PC-9 (cell line): ENCODE measurements at regions of chr2 and their contacts with region 1.

Region 1: GRCh38 chr2:176171351-176172006 is 14.4 kb downstream of the HOXD3 start:
- DNase-seq: no peak
- H3K4me3 ChIP-seq: no peak overlapping the region
- H3K27ac ChIP-seq: no peak overlapping the region
- H3K4me1 ChIP-seq: no peaks in the 10 kb centered on the region
- H3K27me3 ChIP-seq: peaks cover 46% of the 10 kb centered on the region
- CTCF ChIP-seq: no peak

Region 2: DNA sequence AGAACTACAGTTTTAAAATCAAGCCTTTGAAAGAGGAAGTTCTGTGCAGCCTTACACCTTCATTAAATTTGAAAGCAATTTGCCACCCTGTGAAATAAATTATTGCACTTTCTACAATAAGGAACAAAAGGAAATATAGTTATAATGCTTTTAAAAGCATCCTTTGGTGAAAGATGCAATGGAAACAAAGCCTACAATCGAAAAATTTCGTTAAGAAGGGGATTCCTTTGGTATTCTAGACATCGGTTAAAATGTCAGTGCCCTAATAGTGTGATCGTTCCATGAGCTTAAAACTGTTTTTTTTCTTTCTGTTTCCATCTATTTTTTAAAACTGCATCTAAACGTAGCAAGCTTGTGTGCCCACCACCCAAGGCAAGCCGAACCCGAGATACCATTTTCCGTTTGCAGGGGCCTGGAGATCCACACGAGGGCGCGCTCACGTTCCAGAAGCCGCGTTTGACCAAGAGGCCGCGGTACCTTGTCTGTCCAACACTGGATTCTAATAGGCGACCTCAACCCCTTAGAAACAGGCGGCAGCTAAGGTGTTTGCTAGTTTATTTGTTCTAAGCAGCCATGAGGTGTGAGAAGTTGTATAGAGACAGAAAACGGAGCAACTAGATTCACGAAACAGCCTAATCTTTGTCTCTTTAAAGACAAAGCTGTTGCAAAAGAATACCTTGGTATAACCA is 60.4 kb before region 1 on chr2:
- CTCF ChIA-PET with region 1: interaction called, 10 read pairs
- POLR2A ChIA-PET with region 1: no interaction called
- intact Hi-C with region 1: no loop called
- DNase-seq: peak in 1 of 2 experiments; percentile 46
- H3K4me3 ChIP-seq: no peak overlapping the region
- H3K27ac ChIP-seq: no peak overlapping the region
- H3K4me1 ChIP-seq: no peaks in the 10 kb centered on the region
- H3K27me3 ChIP-seq: peaks cover 53% of the 10 kb centered on the region
- CTCF ChIP-seq: peak; percentile 80

Region 3: DNA sequence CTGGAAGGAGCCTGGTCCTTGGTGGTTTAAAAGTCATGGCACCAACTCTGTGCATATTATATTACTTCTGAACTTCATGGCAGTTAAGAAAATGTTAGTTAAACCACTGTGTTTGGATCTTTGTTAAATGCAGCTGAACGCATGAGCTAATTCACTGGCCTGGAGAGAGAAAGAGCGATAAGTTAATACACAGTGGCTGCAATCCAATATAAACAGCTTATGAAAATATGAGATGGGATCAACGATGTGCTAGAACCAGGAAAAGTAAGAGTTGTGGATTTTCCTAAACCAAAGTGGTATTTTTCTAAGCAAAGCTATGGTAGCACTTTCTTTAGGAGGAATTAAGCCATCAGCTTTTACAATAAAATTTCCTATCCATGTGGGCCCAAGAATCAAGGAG is 424.5 kb after region 1 on chr2:
- CTCF ChIA-PET with region 1: no interaction called
- POLR2A ChIA-PET with region 1: interaction called, 10 read pairs
- intact Hi-C with region 1: no loop called
- DNase-seq: no peak
- H3K4me3 ChIP-seq: no peak overlapping the region
- H3K27ac ChIP-seq: no peak overlapping the region
- H3K4me1 ChIP-seq: no peaks in the 10 kb centered on the region
- H3K27me3 ChIP-seq: no peaks in the 10 kb centered on the region
- CTCF ChIP-seq: no peak